Sciatic nerve (tissue), 2 donors: ENCODE measurements at regions of chr14 and their contacts with region 1.

Region 1: GRCh38 chr14:91323671-91324605 is 79.4 kb upstream of the GPR68 start:
- DNase-seq: peak; percentile 93
- ATAC-seq: peak; percentile 87

Region 2: GRCh38 chr14:91418387-91419043 is 94.6 kb after region 1 on chr14:
- intact Hi-C with region 1: loop called (anchors 5 kb)
- DNase-seq: peak; percentile 79
- ATAC-seq: peak; percentile 85

Region 3: GRCh38 chr14:91649930-91650329 is 326.0 kb after region 1 on chr14:
- intact Hi-C with region 1: no loop called
- DNase-seq: no peak
- ATAC-seq: peak; percentile 73

Region 4: DNA sequence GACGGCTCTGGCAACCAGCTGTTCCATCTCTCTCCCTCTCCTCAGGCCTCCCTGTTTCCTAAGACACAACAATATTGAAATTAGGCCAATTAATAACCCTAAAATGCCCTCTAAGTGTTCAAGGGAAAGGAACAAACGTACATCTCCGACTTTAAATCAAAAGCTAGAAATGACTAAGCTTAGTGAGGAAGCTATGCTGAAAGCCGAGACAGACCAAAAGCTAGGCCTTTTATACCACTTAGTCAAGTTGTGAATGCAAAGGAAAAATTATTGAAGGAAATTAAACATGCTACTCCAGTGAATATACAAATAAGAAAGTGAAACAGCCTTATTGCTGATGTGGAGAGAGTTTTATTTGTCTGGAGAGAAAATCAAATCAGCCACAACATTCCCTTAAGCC is 469.8 kb after region 1 on chr14:
- intact Hi-C with region 1: loop called (anchors 5 kb)
- DNase-seq: no peak
- ATAC-seq: no peak

Region 5: GRCh38 chr14:92768795-92769194 is 1444.9 kb after region 1 on chr14:
- intact Hi-C with region 1: no loop called
- DNase-seq: no peak
- ATAC-seq: no peak